Aorta (tissue), 5 donors: ENCODE measurements at regions of chr17 and their contacts with region 1.

Region 1: DNA sequence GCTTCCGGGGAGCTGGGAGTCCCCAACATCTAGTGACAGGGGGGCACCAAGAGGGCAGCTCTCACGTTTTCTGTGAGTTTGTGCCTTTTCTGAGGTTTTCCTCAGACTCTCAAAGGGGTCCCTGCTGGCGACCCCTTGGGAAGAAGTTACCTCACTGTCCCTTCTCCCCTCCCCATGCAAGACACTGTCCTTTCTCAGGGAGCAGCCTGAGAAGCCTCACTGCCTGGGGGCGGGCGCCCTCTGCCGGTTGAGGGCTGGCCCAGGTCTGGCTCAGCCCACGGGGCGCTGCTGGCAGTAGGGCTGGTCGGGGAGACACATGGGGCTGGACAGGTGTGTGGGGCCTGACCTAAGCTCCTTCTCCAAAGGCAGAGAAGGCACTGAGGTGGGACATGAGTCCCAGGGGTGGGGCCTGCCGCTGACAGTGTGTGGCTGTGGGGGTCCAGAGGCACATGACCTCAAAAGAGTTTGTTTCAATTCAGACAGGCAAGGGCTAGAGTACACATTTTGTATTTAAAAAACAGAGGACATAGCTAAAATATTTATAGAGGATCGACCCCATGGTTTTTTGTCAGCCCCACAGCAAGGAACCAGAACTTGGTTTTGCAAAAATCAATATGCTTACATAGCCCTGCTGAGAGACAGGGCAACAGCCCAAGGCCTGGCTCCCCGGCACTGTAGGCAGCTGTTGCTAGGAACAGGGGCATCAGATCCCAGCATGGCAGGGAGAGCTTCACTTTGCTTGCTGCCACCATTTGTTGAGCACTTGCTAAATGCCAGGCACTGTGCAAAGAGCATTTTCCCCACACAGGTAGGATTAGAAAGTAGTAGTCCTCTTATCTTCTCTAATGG is 18.5 kb upstream of the ALDH3A1 start:
- DNase-seq: peak; percentile 84 to 95
- ATAC-seq: peak; percentile 90
- H3K4me3 ChIP-seq: no peak overlapping the region
- H3K27ac ChIP-seq: no peak overlapping the region
- H3K4me1 ChIP-seq: peaks cover 0 to 5% of the 10 kb centered on the region in 2 donors
- H3K27me3 ChIP-seq: no peaks in the 10 kb centered on the region

Region 2: DNA sequence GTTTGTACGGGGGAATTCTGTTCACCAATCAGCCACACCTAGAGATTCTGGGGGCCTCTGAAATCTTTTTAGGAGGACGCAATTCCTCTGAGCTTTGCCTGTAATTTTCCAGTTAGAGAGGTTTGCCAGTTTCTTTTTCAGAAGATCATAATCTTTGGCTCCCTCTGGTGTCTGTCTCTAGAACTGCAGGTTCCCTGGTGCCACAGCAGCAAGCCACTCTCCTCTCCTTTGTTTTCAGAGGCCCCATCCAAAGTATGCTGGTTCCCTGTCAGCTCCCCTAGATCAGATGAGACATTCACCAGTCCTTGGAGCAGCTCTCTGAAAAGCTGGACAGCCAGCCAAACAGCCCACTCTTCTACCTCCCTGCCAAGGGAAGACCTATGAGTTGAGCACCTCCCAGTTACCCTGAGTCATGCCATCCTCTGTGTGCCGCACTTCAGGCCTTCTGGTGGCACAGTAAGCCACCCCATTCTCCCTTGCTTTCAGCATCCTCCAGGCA is 319.5 kb before region 1 on chr17:
- intact Hi-C with region 1: loop called in 1 of 2 experiments (anchors 5 kb)
- DNase-seq: peak; percentile 64 to 80
- ATAC-seq: peak; percentile 90
- H3K4me3 ChIP-seq: no peak overlapping the region
- H3K27ac ChIP-seq: peak overlapping the region in 1 of 2 donors; percentile 92
- H3K4me1 ChIP-seq: peaks cover 0 to 5% of the 10 kb centered on the region in 2 donors
- H3K27me3 ChIP-seq: no peaks in the 10 kb centered on the region

Region 3: GRCh38 chr17:19513897-19514488 is 252.7 kb before region 1 on chr17:
- intact Hi-C with region 1: loop called (anchors 2 kb)
- DNase-seq: peak; percentile 75 to 86
- ATAC-seq: peak; percentile 90
- H3K4me3 ChIP-seq: no peak overlapping the region
- H3K27ac ChIP-seq: peak overlapping the region; percentile 71 to 88
- H3K4me1 ChIP-seq: no peaks in the 10 kb centered on the region
- H3K27me3 ChIP-seq: no peaks in the 10 kb centered on the region

Region 4: GRCh38 chr17:19703106-19703827 is 63.4 kb before region 1 on chr17:
- intact Hi-C with region 1: loop called in 1 of 2 experiments (anchors 5 kb)
- DNase-seq: no peak
- ATAC-seq: no peak
- H3K4me3 ChIP-seq: no peak overlapping the region
- H3K27ac ChIP-seq: no peak overlapping the region
- H3K4me1 ChIP-seq: no peaks in the 10 kb centered on the region
- H3K27me3 ChIP-seq: no peaks in the 10 kb centered on the region

Region 5: GRCh38 chr17:19744922-19745757 is 21.5 kb before region 1 on chr17:
- intact Hi-C with region 1: no loop called
- DNase-seq: peak; percentile 95 to 98
- ATAC-seq: peak; percentile 90
- H3K4me3 ChIP-seq: no peak overlapping the region
- H3K27ac ChIP-seq: no peak overlapping the region
- H3K4me1 ChIP-seq: no peaks in the 10 kb centered on the region
- H3K27me3 ChIP-seq: no peaks in the 10 kb centered on the region